Posterior vena cava (tissue), 2 donors: ENCODE measurements at regions of chr10 and their contacts with region 1.

Region 1: DNA sequence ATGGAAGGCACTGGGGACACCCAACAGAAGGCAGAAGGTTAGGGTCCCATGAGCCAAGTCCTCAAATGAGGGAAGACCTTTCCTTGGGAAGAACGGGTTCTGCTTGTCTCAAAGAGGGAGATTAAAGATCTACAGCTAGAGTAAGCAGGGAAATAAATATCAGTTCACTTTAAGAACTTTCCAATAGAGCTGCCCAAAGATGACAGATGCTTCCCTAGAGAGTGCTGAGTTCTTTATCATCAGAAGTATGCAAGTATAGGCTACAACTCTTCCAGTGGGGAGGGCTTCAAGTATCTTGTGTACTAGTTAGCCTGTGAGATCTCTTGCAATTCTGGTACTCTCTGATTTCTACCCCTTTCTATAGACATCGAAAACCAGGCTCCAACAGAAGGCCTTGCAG is 39.4 kb downstream of the EMX2 start:
- DNase-seq: no peak

Region 2: DNA sequence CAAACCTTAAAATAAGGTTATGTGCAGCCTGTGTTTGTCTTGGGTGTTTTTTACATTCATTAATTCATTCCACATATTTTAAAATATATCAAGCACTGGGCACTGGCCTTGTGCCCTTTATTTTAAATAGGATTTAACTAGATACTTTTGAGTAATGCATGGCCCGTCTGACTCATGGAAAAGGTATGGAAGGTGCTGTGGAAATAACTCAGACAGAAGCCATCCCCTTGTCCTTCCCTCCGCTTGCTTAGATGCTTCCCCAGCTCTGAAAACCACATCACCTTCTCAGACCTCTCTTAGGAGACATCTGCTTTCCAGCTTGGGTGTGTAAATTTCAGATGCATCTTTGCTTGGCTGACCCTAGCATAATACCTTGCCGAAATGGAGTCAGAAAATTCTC is 310.5 kb before region 1 on chr10:
- intact Hi-C with region 1: no loop called
- DNase-seq: no peak

Region 3: GRCh38 chr10:117615649-117616048 is 33.7 kb after region 1 on chr10:
- intact Hi-C with region 1: loop called in 1 of 2 experiments (anchors 2 kb)
- DNase-seq: no peak

Region 4: DNA sequence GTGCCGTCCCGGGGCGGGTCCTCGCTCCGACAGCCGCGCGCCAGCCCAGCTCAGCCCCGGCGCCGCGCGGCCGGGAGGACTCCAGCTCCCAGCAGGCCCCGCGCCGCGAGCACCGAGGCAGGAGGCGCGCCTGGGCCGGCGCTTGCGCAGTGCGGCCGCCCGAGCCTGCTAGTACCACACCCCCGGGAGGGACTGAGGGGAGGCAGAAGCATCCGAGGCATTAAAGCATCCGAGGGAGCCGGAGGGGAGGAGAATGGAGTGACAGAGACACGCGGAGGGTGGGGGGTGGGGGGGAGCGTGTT is 1625.4 kb after region 1 on chr10 and contains the start of gene GRK5:
- intact Hi-C with region 1: no loop called
- DNase-seq: peak; percentile 98
- total RNA-seq, gene GRK5: 40.0 to 57.5 TPM

Region 5: GRCh38 chr10:119299531-119299930 is 1717.6 kb after region 1 on chr10:
- intact Hi-C with region 1: no loop called
- DNase-seq: no peak